ENCODE measurements at regions of chr12 and their contacts with region 1.

Region 1: DNA sequence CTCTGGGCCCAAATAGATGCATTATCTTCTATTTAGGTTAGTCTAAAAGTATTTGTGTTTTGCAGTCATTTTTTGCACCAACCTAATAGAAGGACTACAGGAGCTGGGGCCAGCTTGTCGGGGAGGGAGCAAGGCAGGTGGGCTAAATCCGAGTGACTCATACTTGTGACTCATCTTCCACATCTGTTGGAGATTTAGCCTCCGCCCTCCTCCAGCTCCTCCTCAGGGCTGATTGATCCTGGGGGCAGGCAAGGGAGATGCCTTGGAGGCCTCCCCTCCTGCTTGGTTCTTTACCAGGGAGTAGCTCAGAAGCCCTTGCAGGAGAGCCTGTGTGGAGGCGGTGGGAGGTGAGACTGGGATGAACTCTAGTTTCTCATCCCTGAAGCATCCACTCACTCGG is 27.9 kb downstream of the RHOF start:
- DNase-seq: peak; percentile 47 to 70 (median 68)
- ATAC-seq: peak; percentile 38
- H3K4me3 ChIP-seq: no peak overlapping the region
- H3K27ac ChIP-seq: no peak overlapping the region
- H3K4me1 ChIP-seq: peaks cover 11 to 29% of the 10 kb centered on the region in 2 experiments; a peak in 4 of 5 replicates
- H3K27me3 ChIP-seq: no peaks in the 10 kb centered on the region
- CTCF ChIP-seq: no peak
- EP300 ChIP-seq: no peak; the same call in 1 of the 2 replicates
- POLR2A ChIP-seq: no peak
- RAD21 ChIP-seq: no peak

Region 2: GRCh38 chr12:121697098-121697698 is 68.4 kb before region 1 on chr12:
- CTCF ChIA-PET with region 1: interaction called, 82 read pairs
- POLR2A ChIA-PET with region 1: no interaction called
- in situ Hi-C with region 1: loop called (anchors 5 kb)
- intact Hi-C with region 1: no loop called
- DNase-seq: peak; percentile 35 to 65 (median 40)
- ATAC-seq: 0 out of 3 replicates have a peak, but pooled peaks have one; percentile 26
- H3K4me3 ChIP-seq: no peak overlapping the region
- H3K27ac ChIP-seq: no peak overlapping the region
- H3K4me1 ChIP-seq: no peaks in the 10 kb centered on the region; a peak in 1 of 5 replicates
- H3K27me3 ChIP-seq: no peaks in the 10 kb centered on the region
- CTCF ChIP-seq: peak; percentile 47 to 75 (median 49); a peak in 5 of 6 replicates
- EP300 ChIP-seq: no peak
- POLR2A ChIP-seq: no peak
- RAD21 ChIP-seq: peak; percentile 92 to 94

Region 3: DNA sequence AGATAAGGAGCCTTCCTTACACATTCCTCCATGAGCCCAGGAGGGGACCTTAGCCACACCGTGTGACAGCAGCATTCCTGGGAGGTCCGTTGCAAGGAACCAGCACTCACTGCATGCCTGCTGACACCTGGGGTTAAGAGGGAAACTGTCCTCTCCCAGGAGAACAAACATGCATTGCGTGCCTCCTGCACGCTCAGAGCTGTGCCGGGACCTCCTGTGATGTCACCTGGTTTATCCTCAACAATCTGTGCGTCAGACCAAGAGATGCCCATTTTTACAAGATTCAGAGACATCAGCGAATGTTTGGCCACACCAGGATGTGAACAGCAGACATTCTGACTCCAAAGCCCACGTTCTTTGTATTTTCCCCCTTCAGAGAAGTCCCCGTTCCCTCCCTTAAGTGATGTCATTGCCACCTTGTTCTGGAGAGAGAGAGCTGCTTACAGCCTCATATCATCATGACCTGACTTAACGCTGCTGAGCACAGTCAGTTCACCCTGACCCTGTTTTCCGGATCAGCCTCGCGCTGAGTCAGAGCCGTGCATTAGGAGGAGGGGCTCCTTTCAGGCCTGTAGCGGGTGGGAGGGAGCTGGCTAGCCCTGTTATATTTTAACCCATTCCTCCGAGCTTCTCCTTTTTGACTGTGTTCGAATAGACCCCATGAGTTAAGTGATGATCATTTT is 16.9 kb before region 1 on chr12:
- CTCF ChIA-PET with region 1: no interaction called
- POLR2A ChIA-PET with region 1: interaction called, 14 read pairs
- in situ Hi-C with region 1: no loop called
- intact Hi-C with region 1: no loop called
- DNase-seq: peak; percentile 84 to 95 (median 87)
- ATAC-seq: peak; percentile 100
- H3K4me3 ChIP-seq: no peak overlapping the region
- H3K27ac ChIP-seq: peak overlapping the region; percentile 95
- H3K4me1 ChIP-seq: peaks cover 14 to 22% of the 10 kb centered on the region in 2 experiments
- H3K27me3 ChIP-seq: no peaks in the 10 kb centered on the region
- CTCF ChIP-seq: no peak
- EP300 ChIP-seq: peak; percentile 79
- POLR2A ChIP-seq: no peak
- RAD21 ChIP-seq: no peak

Region 4: DNA sequence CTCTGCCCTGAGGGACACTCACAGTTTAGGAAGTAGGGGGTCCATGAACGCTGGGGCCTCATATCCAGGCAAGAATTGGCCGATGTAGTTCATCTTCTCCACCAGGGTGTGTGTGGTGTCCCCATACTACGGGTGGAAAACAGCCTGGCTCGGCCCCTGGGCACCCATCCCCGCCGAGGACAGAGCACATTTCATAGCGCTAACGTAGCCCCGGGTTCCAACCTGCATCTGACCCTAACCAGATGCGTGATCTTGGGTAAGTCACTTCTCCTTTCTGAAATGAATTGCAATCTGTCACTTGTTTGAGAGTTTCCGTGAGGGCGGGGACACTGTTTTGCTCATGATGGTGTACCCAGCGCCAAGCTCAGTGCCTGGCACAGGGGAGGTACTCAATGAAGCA is 84.1 kb after region 1 on chr12:
- CTCF ChIA-PET with region 1: no interaction called
- POLR2A ChIA-PET with region 1: no interaction called
- in situ Hi-C with region 1: no loop called
- intact Hi-C with region 1: no loop called
- DNase-seq: no peak
- ATAC-seq: peak; percentile 64
- H3K4me3 ChIP-seq: no peak overlapping the region
- H3K27ac ChIP-seq: no peak overlapping the region
- H3K4me1 ChIP-seq: peaks cover 0 to 8% of the 10 kb centered on the region in 2 experiments; a peak in 2 of 5 replicates
- H3K27me3 ChIP-seq: peaks cover 0 to 5% of the 10 kb centered on the region in 2 experiments; a peak in 1 of 5 replicates
- CTCF ChIP-seq: 0 out of 6 replicates have a peak, but pooled peaks have one; percentile 6 to 14 (median 13)
- EP300 ChIP-seq: no peak
- POLR2A ChIP-seq: no peak
- RAD21 ChIP-seq: no peak